Natural killer cell (primary cell): ENCODE measurements at regions of chr5 and their contacts with region 1.

Region 1: DNA sequence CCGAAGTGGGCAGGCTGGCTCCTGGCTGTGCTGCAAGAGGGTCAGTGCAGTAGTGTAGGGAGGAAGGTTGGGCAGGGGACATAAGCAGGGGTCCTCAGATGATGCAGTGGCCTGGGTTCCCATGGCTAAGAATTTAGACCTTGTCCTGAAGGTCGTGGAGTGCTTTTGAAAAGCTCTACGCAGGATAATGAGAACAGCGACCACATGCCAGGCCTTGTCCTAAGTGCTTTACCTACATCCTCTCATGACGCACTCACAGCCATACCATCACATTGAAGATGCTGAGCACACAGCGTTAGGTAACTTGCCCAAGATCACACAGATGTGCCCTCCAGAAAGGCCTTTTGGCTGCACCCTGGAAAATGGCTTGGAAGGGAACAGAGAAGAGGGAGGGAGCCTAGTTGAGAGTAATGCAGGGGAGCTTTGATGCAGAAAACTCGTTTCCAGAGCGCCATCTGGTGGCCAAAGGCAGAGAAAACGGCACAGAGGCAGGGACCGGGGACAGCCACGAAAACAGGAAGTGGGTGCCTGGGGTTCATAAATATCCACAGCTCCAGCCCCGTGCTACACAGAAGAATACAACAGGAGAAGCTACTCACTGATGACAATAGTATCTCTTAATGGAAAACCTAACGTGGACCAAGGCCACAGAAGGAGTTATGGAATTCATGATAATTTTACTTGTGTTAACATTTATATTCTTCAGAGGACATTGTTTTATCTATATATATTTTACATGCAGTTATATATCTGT is 2.6 kb upstream of the PCDH12 start:
- DNase-seq: peak; percentile 86 to 96
- ATAC-seq: peak; percentile 93 to 94 (median 94)
- H3K4me3 ChIP-seq: no peak overlapping the region
- H3K4me3 Mint-ChIP-seq: peak overlapping the region; percentile 78
- H3K27ac ChIP-seq: peak overlapping the region; percentile 55
- H3K27ac Mint-ChIP-seq: peak overlapping the region; percentile 77 to 86
- H3K4me1 ChIP-seq: peaks cover 41% of the 10 kb centered on the region
- H3K4me1 Mint-ChIP-seq: peaks cover 43 to 44% of the 10 kb centered on the region in 2 donors
- H3K27me3 ChIP-seq: no peaks in the 10 kb centered on the region
- H3K27me3 Mint-ChIP-seq: no peaks in the 10 kb centered on the region
- CTCF ChIP-seq: peak; percentile 76

Region 2: DNA sequence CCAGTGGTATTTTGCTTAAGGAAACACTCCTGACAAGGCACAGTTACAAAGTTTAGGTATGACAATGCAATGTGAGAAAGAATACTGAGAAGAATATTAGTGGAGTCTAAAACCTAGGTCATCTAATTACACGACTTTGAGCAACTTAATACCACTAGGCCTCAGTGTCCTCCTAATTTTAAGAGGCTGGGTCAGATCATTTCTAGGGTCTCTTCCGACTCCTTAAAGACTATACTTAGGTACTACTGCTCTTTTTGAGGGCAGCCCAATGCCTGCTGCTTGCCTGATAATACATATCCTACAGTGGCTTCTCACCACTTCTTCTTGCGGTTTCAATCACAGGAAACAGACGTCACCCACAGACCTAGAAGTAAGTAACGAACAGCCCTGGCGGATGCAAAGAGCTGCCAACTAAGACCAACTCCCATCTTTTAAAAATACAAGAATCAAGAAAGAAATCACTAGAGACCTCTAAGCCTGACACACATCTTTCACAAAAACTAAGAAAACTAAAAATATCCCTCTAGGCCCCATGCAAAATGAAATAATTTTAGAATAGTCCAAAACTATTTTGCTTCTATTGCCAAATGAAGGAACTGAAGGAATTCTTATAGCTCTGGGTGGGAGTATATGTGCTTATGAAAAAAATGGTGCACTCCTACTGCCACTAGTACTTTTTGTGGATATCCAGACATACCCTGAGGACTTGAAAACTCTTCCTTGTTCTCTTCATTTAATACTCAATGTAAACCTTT is 354.9 kb before region 1 on chr5:
- intact Hi-C with region 1: no loop called
- DNase-seq: peak; percentile 56 to 94
- ATAC-seq: peak; percentile 88 to 97 (median 96)
- H3K4me3 ChIP-seq: peak overlapping the region; percentile 19
- H3K4me3 Mint-ChIP-seq: peak overlapping the region; percentile 81
- H3K27ac ChIP-seq: peak overlapping the region; percentile 90
- H3K27ac Mint-ChIP-seq: peak overlapping the region; percentile 95 to 96
- H3K4me1 ChIP-seq: peaks cover 54% of the 10 kb centered on the region
- H3K4me1 Mint-ChIP-seq: peaks cover 82 to 84% of the 10 kb centered on the region in 2 donors
- H3K27me3 ChIP-seq: no peaks in the 10 kb centered on the region
- H3K27me3 Mint-ChIP-seq: no peaks in the 10 kb centered on the region
- CTCF ChIP-seq: no peak

Region 3: GRCh38 chr5:141657937-141658545 is 302.6 kb before region 1 on chr5:
- intact Hi-C with region 1: no loop called
- DNase-seq: no peak
- ATAC-seq: no peak
- H3K4me3 ChIP-seq: no peak overlapping the region
- H3K4me3 Mint-ChIP-seq: no peak overlapping the region
- H3K27ac ChIP-seq: no peak overlapping the region
- H3K27ac Mint-ChIP-seq: no peak overlapping the region
- H3K4me1 ChIP-seq: no peaks in the 10 kb centered on the region
- H3K4me1 Mint-ChIP-seq: no peaks in the 10 kb centered on the region
- H3K27me3 ChIP-seq: no peaks in the 10 kb centered on the region
- H3K27me3 Mint-ChIP-seq: no peaks in the 10 kb centered on the region
- CTCF ChIP-seq: no peak

Region 4: DNA sequence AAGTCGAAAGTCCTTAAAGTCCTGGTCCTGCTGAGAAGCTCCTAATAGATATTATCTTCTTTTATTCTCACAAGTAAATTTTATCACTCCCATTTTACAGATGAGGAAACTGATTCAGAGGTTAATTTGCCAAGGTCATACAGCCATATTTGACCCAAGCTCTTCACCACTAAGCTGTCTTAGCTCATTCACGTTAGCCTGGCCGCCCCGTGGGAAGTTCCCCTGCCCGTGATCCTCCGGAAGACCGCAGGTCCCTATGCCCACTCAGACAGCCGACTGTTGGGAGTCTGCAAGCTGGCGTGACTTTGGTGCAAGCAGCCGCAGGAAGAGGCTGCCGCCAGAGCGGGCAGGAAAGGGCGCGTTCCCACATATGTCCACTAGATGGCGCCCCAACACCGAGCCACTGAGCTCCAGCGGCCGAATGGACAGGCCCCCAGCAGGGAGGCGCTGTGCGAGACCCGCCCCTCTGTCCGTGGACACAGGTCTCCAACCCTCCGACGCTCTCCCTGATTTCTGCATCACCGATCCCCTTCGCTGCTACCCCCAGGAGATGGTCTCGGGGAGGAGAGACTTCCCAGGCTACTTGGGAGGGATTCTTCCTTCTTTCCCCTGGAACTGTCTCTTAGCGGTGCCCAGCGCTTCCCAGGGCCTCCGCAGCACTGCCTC is 268.6 kb before region 1 on chr5:
- intact Hi-C with region 1: loop called (anchors 1 kb)
- DNase-seq: peak; percentile 88 to 89
- ATAC-seq: peak; percentile 95 to 99 (median 99)
- H3K4me3 ChIP-seq: no peak overlapping the region
- H3K4me3 Mint-ChIP-seq: peak overlapping the region; percentile 42
- H3K27ac ChIP-seq: no peak overlapping the region
- H3K27ac Mint-ChIP-seq: peak overlapping the region in 1 of 2 donors; percentile 83
- H3K4me1 ChIP-seq: peaks cover 22% of the 10 kb centered on the region
- H3K4me1 Mint-ChIP-seq: peaks cover 13 to 15% of the 10 kb centered on the region in 2 donors
- H3K27me3 ChIP-seq: no peaks in the 10 kb centered on the region
- H3K27me3 Mint-ChIP-seq: peaks cover 3 to 11% of the 10 kb centered on the region in 2 donors
- CTCF ChIP-seq: peak; percentile 95

Region 5: DNA sequence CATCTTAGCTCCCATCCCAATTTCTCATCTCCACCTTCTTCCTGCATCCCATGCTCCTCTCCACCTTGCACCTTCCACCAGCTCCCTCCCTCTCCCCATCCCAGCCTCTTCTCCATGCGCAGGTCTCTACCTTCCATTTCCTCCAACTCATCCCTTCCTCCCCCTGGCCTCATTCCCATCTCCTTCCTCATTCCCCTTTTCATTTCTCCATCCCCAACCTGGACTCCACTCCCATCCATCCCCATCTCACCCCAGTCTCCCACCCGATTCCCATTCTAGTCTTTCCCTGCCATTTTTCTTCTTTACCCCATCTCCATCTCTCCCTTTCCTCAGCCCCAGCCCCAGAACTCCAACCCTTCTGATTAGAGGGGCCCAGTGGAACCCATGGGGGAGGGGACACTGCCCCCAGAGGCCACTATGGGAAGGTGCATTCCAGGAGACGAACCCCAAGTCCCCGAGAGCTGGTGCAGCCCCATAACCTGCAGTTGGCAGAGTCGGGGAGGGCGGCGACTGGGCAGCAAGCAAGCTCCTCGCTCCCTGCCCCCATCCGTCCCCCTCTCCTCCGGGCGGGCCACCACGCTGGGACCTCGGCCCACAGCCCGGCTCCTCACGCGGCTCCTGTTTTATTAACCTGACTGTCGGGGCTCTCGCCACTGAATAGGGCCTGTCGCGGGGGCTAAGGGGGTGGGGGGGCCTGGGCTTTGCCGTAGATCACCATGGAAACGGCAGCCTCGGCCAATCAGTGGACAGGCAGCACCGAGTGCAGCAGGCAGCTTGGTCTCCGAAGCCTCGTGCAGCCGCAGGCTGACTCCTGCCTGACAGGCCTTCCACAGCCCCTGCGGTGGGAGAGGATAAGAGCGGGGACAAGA is 149.1 kb before region 1 on chr5:
- intact Hi-C with region 1: loop called (anchors 2 kb)
- DNase-seq: peak; percentile 20 to 63
- ATAC-seq: peak; percentile 61 to 89 (median 87)
- H3K4me3 ChIP-seq: no peak overlapping the region
- H3K4me3 Mint-ChIP-seq: no peak overlapping the region
- H3K27ac ChIP-seq: no peak overlapping the region
- H3K27ac Mint-ChIP-seq: no peak overlapping the region
- H3K4me1 ChIP-seq: no peaks in the 10 kb centered on the region
- H3K4me1 Mint-ChIP-seq: peaks cover 0 to 6% of the 10 kb centered on the region in 2 donors
- H3K27me3 ChIP-seq: peaks cover 9% of the 10 kb centered on the region
- H3K27me3 Mint-ChIP-seq: peaks cover 35 to 37% of the 10 kb centered on the region in 2 donors
- CTCF ChIP-seq: peak; percentile 62

Region 6: GRCh38 chr5:141923448-141924352 is 36.9 kb before region 1 on chr5 and contains the start of gene DELE1:
- intact Hi-C with region 1: loop called (anchors 1 kb)
- DNase-seq: peak; percentile 86 to 92
- ATAC-seq: peak; percentile 96 to 98 (median 96)
- H3K4me3 ChIP-seq: peak within 1 kb of the TSS; percentile 93
- H3K4me3 Mint-ChIP-seq: peak within 1 kb of the TSS; percentile 97
- H3K27ac ChIP-seq: peak within 1 kb of the TSS; percentile 97
- H3K27ac Mint-ChIP-seq: peak within 1 kb of the TSS; percentile 97
- H3K4me1 ChIP-seq: peaks cover 18% of the 10 kb centered on the region
- H3K4me1 Mint-ChIP-seq: peaks cover 18 to 34% of the 10 kb centered on the region in 2 donors
- H3K27me3 ChIP-seq: no peaks in the 10 kb centered on the region
- H3K27me3 Mint-ChIP-seq: peaks cover 0 to 4% of the 10 kb centered on the region in 2 donors
- CTCF ChIP-seq: no peak
- total RNA-seq, gene DELE1: 106 to 125 (median 115) TPM